CD14-positive monocyte (primary cell): ENCODE measurements at regions of chr4 and their contacts with region 1.

Region 1: DNA sequence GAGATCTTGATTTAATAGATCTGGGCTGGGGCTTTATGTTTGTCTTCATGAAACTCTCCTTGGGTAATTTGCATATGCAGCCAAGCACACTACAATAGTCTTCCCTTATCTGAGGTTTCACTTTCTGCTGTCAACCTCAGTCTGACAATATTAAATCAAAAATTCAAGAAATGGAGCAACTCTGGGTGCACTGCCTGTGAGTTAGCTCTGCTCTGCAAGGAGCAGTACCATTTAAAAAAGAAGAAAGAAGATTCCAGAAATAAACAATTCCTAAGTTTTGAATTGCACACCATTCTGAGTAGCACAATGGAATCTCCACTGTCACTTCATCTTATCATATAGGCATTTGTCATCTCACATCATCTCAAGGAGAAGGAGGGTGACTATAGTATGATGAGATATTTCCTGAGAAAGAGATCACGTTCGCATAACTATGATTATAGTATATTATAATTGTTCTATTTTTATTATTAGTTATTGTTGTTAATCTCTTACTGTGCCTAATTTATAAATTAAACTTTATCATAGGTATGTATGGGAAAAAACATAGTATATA is 9.4 kb downstream of the FNIP2 start:
- DNase-seq: peak in 1 of 3 donors; percentile 27
- H3K4me3 ChIP-seq: peak overlapping the region in 1 of 3 experiments; percentile 55
- H3K4me3 Mint-ChIP-seq: peak overlapping the region in 1 of 2 donors; percentile 78
- H3K27ac ChIP-seq: peak overlapping the region in 1 of 2 donors; percentile 69
- H3K27ac Mint-ChIP-seq: peak overlapping the region in 6 of 7 donors; percentile 0 to 77 (median 72)
- H3K4me1 ChIP-seq: peaks cover 17 to 31% of the 10 kb centered on the region in 2 donors
- H3K4me1 Mint-ChIP-seq: peaks cover 38% of the 10 kb centered on the region
- H3K27me3 ChIP-seq: no peaks in the 10 kb centered on the region
- H3K27me3 Mint-ChIP-seq: peaks cover 0 to 1% (median 0%) of the 10 kb centered on the region in 3 donors
- CTCF ChIP-seq: no peak

Region 2: DNA sequence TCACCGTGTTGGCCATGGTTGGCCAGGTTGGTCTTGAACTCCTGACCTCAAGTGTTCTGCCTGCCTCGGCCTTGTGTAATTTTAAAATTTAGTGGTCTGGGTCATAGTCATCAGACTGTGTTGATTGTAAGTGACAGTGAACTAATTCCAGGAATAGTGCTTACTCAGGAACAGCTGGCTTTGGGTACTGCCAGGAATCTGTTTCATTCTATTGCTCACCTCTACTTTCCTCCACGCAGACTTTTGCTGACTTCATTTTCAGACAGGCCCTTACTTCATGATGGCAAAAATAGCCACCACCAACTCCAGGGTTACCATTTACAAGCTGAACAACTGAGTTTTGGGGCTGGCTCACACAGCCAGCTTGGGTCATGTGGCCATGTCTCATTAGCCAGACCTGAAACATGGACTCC is 45.2 kb after region 1 on chr4:
- intact Hi-C with region 1: no loop called
- DNase-seq: peak in 1 of 3 donors; percentile 49
- H3K4me3 ChIP-seq: no peak overlapping the region
- H3K4me3 Mint-ChIP-seq: no peak overlapping the region
- H3K27ac ChIP-seq: no peak overlapping the region
- H3K27ac Mint-ChIP-seq: peak overlapping the region in 3 of 7 donors; percentile 41 to 64 (median 58)
- H3K4me1 ChIP-seq: peaks cover 22 to 24% of the 10 kb centered on the region in 2 donors
- H3K4me1 Mint-ChIP-seq: peaks cover 32% of the 10 kb centered on the region
- H3K27me3 ChIP-seq: no peaks in the 10 kb centered on the region
- H3K27me3 Mint-ChIP-seq: no peaks in the 10 kb centered on the region
- CTCF ChIP-seq: no peak

Region 3: GRCh38 chr4:158836018-158836369 is 57.8 kb after region 1 on chr4:
- intact Hi-C with region 1: loop called in 1 of 2 experiments (anchors 10 kb)
- DNase-seq: no peak
- H3K4me3 ChIP-seq: no peak overlapping the region
- H3K4me3 Mint-ChIP-seq: no peak overlapping the region
- H3K27ac ChIP-seq: peak overlapping the region in 1 of 2 donors; percentile 1
- H3K27ac Mint-ChIP-seq: peak overlapping the region in 4 of 7 donors; percentile 3 to 78 (median 27)
- H3K4me1 ChIP-seq: no peaks in the 10 kb centered on the region
- H3K4me1 Mint-ChIP-seq: no peaks in the 10 kb centered on the region
- H3K27me3 ChIP-seq: no peaks in the 10 kb centered on the region
- H3K27me3 Mint-ChIP-seq: no peaks in the 10 kb centered on the region
- CTCF ChIP-seq: no peak